Dendritic cell treated with granulocyte-macrophage colony-stimulating factor and Interleukin-4, amounts not matched to agents 40 ng/mL and 50 ng/mL, for 4 days (primary cell): ENCODE measurements at regions of chr12 and their contacts with region 1.

Region 1: GRCh38 chr12:67457778-67458177 is 188.6 kb downstream of the CAND1 start:
- H3K4me3 Mint-ChIP-seq: no peak overlapping the region
- H3K27ac Mint-ChIP-seq: peak overlapping the region; percentile 72
- H3K4me1 Mint-ChIP-seq: peaks cover 54% of the 10 kb centered on the region
- H3K27me3 Mint-ChIP-seq: peaks cover 35% of the 10 kb centered on the region

Region 2: GRCh38 chr12:67355578-67356379 is 102.0 kb before region 1 on chr12:
- intact Hi-C with region 1: loop called (anchors 10 kb)
- H3K4me3 Mint-ChIP-seq: no peak overlapping the region
- H3K27ac Mint-ChIP-seq: no peak overlapping the region
- H3K4me1 Mint-ChIP-seq: peaks cover 7% of the 10 kb centered on the region
- H3K27me3 Mint-ChIP-seq: peaks cover 1% of the 10 kb centered on the region

Region 3: DNA sequence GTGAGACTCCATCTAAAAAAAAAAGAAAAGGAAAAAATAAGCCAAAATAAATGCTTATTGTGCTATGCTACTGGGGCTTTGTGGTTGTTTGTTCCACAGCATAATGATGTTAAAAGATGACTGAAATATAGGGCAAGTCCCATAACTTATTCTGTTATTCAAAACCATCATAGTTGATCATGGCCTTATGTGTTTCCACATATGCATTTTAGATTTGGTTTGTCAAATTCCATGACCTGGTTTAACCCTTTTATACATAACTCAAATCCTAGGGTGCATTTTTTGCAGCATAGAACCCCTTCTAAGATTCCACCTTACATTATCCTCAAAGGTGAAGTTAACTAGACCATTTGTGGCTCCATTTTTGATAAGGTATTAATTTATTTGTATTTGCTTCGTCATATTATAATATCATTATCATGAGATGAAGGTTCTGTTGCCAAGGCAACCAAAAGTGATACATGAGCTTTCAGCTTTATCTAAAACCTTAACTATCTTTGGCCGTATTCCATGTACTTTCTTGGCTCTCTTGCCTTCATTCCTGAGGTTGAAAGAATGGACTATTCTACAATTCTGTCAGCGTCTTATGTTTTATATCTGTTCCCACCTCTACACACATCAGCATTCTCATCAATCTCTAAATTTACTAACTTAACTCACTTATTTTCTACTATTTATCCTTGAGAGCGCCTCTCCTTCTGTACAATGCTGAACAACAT is 52.0 kb after region 1 on chr12:
- intact Hi-C with region 1: loop called (anchors 10 kb)
- H3K4me3 Mint-ChIP-seq: no peak overlapping the region
- H3K27ac Mint-ChIP-seq: no peak overlapping the region
- H3K4me1 Mint-ChIP-seq: peaks cover 5% of the 10 kb centered on the region
- H3K27me3 Mint-ChIP-seq: peaks cover 31% of the 10 kb centered on the region

Region 4: DNA sequence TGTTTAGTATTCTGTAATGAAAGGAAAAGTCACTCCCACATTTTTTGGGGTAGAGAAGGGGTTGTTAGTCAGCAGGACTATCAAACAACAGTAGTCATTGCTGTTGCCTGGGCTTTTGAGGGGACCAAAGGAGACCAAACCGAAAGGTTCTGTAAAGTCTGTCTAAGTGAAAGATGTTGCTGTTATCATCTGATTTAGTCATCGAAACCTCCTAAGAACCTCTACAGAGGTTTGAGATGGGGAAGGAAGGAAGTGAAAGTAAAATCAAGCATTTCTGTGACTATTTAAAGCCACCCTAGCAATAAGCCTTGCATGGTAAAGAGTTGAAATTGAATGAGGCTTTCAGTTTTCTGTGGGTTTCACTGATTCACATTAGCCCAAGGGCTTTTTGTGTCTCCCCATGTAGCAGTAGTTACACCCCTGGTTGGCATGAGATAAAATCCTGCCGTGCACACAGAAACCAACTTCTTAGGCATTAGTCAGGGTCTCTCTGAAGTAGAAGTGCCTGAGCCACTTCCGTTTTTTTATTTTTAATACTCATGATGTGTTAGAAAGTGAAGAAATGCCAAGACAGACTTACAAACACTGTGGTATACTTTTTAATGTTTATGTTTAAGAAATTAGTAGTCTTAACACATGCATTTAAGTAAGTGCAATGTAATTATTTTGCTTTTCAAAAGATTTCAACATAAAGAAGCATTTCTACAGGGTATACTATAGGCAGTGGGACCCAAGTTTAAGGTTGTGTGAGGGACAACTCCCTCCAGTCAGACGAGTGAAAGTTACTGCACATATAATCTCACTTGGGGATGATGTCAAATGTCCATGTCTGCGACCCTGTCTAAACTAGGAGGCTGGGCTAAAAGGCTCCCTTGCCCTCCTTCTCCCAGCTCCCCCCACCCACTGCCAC is 241.1 kb after region 1 on chr12:
- intact Hi-C with region 1: loop called (anchors 5 kb)
- H3K4me3 Mint-ChIP-seq: peak overlapping the region; percentile 42
- H3K27ac Mint-ChIP-seq: peak overlapping the region; percentile 25
- H3K4me1 Mint-ChIP-seq: peaks cover 18% of the 10 kb centered on the region
- H3K27me3 Mint-ChIP-seq: peaks cover 39% of the 10 kb centered on the region

Region 5: GRCh38 chr12:67765776-67766767 is 308.3 kb after region 1 on chr12:
- intact Hi-C with region 1: no loop called
- H3K4me3 Mint-ChIP-seq: no peak overlapping the region
- H3K27ac Mint-ChIP-seq: no peak overlapping the region
- H3K4me1 Mint-ChIP-seq: no peaks in the 10 kb centered on the region
- H3K27me3 Mint-ChIP-seq: peaks cover 7% of the 10 kb centered on the region